Activated CD4-positive, alpha-beta T cell treated with anti-CD3 and anti-CD28 coated beads for 36 hours (primary cell): ENCODE measurements at regions of chr1 and their contacts with region 1.

Region 1: GRCh38 chr1:210882414-210883221 is 251.3 kb downstream of the KCNH1 start:
- DNase-seq: peak; percentile 12
- ATAC-seq: peak; percentile 84
- H3K4me3 Mint-ChIP-seq: no peak overlapping the region
- H3K27ac Mint-ChIP-seq: peak overlapping the region; percentile 77
- H3K4me1 Mint-ChIP-seq: peaks cover 15% of the 10 kb centered on the region
- H3K27me3 Mint-ChIP-seq: peaks cover 18% of the 10 kb centered on the region

Region 2: DNA sequence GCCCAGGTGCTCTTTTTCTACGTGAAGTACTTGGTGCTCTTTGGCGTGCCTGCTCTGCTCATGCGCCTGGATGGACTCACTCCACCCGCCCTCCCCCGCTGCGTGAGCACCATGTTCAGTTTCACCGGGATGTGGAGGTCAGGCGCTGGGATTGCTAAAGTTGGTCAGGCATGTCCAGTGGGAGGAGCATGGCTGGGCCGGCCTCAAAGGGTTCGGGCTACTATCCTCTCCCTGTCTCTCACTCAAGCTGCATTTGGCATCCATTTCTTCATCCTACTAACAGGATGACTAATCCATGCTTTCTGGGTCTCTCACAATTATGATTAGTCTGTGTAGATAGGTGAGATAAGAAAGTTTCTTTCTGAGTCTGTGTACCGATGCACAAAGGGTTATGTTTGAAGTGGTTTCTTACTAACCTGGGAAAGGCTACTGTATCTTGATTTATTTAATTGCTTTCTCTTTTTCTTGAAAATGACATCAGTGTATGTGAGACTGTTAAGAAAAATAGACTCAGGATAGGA is 418.0 kb before region 1 on chr1:
- CTCF ChIA-PET with region 1: no interaction called
- POLR2A ChIA-PET with region 1: no interaction called
- intact Hi-C with region 1: loop called in 1 of 2 experiments (anchors 5 kb)
- DNase-seq: peak; percentile 45
- ATAC-seq: peak; percentile 92
- H3K4me3 Mint-ChIP-seq: no peak overlapping the region
- H3K27ac Mint-ChIP-seq: peak overlapping the region; percentile 37
- H3K4me1 Mint-ChIP-seq: peaks cover 24% of the 10 kb centered on the region
- H3K27me3 Mint-ChIP-seq: no peaks in the 10 kb centered on the region

Region 3: GRCh38 chr1:210828996-210829596 is 53.5 kb before region 1 on chr1:
- CTCF ChIA-PET with region 1: no interaction called
- POLR2A ChIA-PET with region 1: no interaction called
- intact Hi-C with region 1: no loop called
- DNase-seq: no peak
- ATAC-seq: no peak
- H3K4me3 Mint-ChIP-seq: no peak overlapping the region
- H3K27ac Mint-ChIP-seq: no peak overlapping the region
- H3K4me1 Mint-ChIP-seq: no peaks in the 10 kb centered on the region
- H3K27me3 Mint-ChIP-seq: peaks cover 6% of the 10 kb centered on the region

Region 4: DNA sequence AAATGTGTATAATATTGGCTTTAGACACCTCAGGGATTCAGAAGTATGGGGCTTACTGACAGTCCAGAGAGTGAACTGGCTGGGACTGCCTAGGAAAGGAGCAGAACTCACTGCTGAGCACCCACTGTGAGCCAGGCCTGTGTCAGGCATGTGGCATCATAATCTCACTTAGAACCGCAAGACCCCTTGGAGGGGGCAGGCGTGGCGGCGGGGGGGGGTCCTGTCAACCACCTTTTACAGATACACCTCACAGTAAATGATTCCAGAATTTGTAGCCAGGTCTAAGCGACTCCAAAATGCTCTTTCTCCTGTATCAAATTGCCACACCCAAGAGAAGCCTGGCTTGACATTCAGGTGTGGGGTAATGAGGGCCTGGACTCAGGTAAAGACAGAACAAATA is 15.9 kb after region 1 on chr1:
- CTCF ChIA-PET with region 1: no interaction called
- POLR2A ChIA-PET with region 1: no interaction called
- intact Hi-C with region 1: loop called in 1 of 2 experiments (anchors 1 kb)
- DNase-seq: no peak
- ATAC-seq: no peak
- H3K4me3 Mint-ChIP-seq: no peak overlapping the region
- H3K27ac Mint-ChIP-seq: no peak overlapping the region
- H3K4me1 Mint-ChIP-seq: no peaks in the 10 kb centered on the region
- H3K27me3 Mint-ChIP-seq: peaks cover 14% of the 10 kb centered on the region